Right ventricle myocardium superior (tissue), 1 donor: ENCODE measurements at regions of chr3 and their contacts with region 1.

Region 1: GRCh38 chr3:42652611-42653302 is 740 bp upstream of the ZBTB47 start:
- DNase-seq: peak; percentile 80
- ATAC-seq: peak; percentile 30

Region 2: DNA sequence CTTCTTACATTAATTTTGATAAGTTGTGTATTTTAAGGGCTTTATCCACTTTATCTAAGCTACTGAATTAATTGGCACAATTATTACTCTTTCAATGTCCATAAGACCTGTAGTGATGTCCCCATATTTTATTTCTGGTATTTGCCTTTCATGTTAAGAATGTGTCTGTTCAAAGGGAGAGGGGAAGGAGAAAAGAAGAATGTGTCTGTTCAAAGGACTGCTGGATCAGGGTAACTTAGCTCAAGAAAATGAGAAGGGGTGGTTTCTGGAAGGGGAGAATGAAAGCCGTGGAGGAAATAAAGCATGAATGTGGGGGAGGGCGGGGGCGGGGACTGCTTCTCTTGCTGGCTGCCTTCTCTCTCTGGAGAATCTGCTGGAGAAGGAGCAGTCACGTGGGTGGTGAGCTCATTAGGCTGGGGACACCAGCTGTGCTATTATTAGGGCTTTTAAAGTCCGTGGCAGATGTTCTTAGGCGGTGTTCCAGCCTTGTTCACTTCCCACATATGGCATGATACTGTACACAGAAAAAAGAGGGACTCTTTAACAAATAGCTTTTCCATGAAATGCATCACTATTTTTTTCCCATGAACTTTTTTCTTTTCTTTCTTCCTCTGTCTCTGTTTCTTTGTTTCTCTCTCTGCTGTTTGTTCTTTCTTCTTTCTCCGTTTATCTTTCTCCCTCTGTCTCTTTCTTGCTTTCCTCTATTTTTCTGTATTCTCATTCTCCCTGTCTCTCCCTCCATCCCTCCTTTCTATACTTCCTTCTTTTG is 627.2 kb before region 1 on chr3:
- intact Hi-C with region 1: loop called (anchors 5 kb)
- DNase-seq: peak; percentile 91
- ATAC-seq: peak; percentile 98

Region 3: GRCh38 chr3:42600111-42600988 is 52.4 kb before region 1 on chr3 and contains the start of gene NKTR:
- intact Hi-C with region 1: loop called (anchors 5 kb)
- DNase-seq: peak; percentile 98
- ATAC-seq: peak; percentile 97
- total RNA-seq, gene NKTR: 21.6 TPM

Region 4: DNA sequence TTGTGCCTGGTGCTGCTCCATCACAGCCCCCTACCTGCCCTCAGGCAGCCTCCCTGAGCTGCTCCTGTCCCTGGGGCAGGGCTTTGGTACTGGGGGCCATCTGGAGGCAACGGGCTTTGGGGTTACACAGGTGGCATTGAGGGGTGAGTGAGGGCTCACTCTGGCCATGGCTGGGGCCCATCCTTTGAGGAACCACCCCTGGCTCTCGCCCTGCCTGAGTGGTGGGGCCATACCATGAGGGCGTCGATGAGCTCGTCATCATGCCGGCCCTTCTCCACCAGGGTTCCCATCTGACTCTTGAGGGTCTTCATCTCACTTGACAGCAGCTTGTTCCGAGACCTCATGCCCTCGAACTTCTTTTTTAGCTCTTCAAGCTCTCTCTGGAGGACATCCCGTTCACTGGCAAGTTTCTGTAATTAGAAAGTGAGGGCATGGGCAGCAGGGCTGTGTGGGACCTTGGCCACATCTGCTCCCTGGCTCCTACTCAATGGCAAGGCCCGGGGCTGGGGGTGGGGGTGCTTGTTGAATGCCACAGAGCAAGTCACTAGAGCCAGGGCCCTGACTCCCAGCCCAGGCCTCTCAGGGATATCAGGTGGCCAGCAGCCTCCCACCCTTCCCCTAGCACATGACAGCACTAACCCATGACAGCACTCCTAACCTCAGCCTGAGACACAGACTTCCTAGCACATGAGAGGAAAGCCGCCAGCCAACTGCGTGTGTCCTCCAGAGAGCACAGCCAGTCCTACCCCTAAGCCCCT is 86.8 kb after region 1 on chr3:
- intact Hi-C with region 1: loop called (anchors 5 kb)
- DNase-seq: peak; percentile 93
- ATAC-seq: peak; percentile 93